Activated CD8-positive, alpha-beta T cell treated with anti-CD3 and anti-CD28 coated beads, Interleukin-2, amount 10 ng/mL, durations not matched to agents 7 days and 5 days (primary cell): ENCODE measurements at regions of chr17 and their contacts with region 1.

Region 1: DNA sequence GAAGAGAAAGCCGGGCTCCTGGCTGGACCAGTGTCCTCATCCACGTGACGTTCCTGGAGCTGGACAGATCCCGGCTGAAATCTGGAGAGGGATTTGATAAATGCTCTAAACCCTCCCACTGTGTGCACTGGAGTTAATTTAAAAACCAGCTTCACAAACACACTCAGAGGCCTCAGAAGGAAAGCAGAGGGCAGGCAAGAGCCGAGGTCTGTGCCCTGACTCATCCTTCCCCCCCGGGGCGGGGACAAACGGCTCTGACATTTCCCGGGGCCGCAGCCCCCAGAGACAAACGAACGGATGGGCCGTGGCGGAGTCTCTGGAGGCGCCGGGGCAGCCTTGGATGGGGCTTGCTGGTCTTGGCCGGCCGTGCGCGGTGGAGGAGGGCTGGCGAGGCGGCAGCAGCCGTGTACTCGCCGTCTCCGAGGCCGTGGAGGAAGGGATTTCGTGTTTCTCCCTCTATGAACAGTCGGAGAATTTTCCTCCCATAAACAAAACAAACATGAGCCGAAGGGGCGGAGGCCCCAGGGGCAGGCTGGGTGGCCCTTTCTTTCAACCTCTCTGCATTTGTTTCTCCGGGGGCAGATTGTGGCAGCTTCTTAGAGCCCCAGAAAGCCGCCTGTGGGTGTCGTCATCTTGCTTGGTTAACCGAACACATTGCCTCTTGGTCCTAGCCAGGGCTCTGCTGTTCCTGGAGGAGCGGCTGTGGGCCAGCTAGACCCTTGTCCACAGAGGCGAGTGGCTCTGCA is 94.3 kb downstream of the NTN1 start:
- DNase-seq: peak; percentile 70
- ATAC-seq: peak; percentile 94
- H3K4me3 Mint-ChIP-seq: peak overlapping the region; percentile 59
- H3K27ac Mint-ChIP-seq: peak overlapping the region; percentile 54
- H3K4me1 Mint-ChIP-seq: peaks cover 12% of the 10 kb centered on the region
- H3K27me3 Mint-ChIP-seq: peaks cover 9% of the 10 kb centered on the region

Region 2: GRCh38 chr17:9291912-9292560 is 176.4 kb after region 1 on chr17:
- CTCF ChIA-PET with region 1: interaction called, 22 read pairs
- POLR2A ChIA-PET with region 1: no interaction called
- DNase-seq: peak; percentile 54
- ATAC-seq: peak; percentile 83
- H3K4me3 Mint-ChIP-seq: no peak overlapping the region
- H3K27ac Mint-ChIP-seq: no peak overlapping the region
- H3K4me1 Mint-ChIP-seq: peaks cover 17% of the 10 kb centered on the region
- H3K27me3 Mint-ChIP-seq: no peaks in the 10 kb centered on the region